Colonic mucosa (tissue), 4 donors: ENCODE measurements at regions of chr13 and their contacts with region 1.

Region 1: DNA sequence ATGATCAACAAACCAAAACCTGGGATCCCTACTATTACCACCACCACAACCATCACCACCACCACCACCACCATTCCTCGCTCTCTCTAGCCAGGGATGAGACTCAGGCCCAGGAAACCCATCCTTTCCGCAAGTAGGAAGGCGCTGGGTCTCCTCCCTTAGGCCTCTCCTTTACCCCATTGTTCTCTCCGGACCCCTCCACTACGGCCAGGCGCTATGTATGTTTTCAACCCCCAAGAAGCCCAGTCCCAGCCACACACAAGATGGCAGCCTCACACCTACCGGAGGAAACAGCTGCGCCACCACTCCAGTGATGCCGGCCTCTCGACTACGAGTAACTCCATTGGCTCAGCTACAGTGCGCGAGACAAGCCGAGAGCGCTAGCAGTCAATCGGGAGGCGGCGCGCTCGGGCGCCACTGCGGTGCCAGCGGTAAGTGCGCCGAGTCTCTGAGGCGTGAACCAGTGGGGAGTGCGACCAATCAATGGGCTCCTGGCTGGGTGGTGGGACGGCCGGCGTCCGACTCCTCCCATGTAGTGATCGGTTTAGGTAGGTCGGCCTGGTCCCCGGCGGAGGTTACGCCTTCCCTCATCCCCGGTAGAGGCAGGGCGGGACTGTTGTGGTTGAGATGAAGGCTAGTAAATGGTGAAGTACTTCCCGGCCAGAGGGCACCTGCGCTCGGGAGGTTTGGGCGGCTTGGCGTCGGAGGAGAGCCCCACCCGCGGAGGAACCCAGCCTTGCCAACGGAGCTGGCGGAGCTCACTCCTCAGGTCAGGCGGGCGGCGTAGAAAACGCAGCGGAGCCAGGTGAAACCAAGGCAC is at the starts of genes CAB39L and SETDB2:
- DNase-seq: peak; percentile 99
- H3K4me3 ChIP-seq: peak within 1 kb of the TSS; percentile 63
- H3K27ac ChIP-seq: peak within 1 kb of the TSS; percentile 98
- H3K4me1 ChIP-seq: no peaks in the 10 kb centered on the region
- H3K27me3 ChIP-seq: no peaks in the 10 kb centered on the region
- CTCF ChIP-seq: peak; percentile 33
- total RNA-seq, gene CAB39L: 6.1 to 14.5 TPM
- total RNA-seq, gene SETDB2: 7.7 to 9.5 TPM

Region 2: GRCh38 chr13:49495783-49496762 is 52.2 kb after region 1 on chr13 and contains the start of gene PHF11:
- intact Hi-C with region 1: loop called (anchors 10 kb)
- DNase-seq: peak; percentile 80
- H3K4me3 ChIP-seq: peak within 1 kb of the TSS; percentile 61
- H3K27ac ChIP-seq: peak within 1 kb of the TSS; percentile 94
- H3K4me1 ChIP-seq: no peaks in the 10 kb centered on the region
- H3K27me3 ChIP-seq: no peaks in the 10 kb centered on the region
- CTCF ChIP-seq: no peak
- total RNA-seq, gene PHF11: 20.3 to 24.1 TPM

Region 3: GRCh38 chr13:49585220-49586157 is 141.6 kb after region 1 on chr13 and contains the start of gene RCBTB1:
- intact Hi-C with region 1: loop called (anchors 10 kb)
- DNase-seq: peak; percentile 83
- H3K4me3 ChIP-seq: peak within 1 kb of the TSS; percentile 87
- H3K27ac ChIP-seq: peak within 1 kb of the TSS; percentile 66
- H3K4me1 ChIP-seq: no peaks in the 10 kb centered on the region
- H3K27me3 ChIP-seq: no peaks in the 10 kb centered on the region
- CTCF ChIP-seq: no peak
- total RNA-seq, gene RCBTB1: 6.2 to 7.5 TPM